ENCODE measurements at regions of chr9 and their contacts with region 1.

Region 1: DNA sequence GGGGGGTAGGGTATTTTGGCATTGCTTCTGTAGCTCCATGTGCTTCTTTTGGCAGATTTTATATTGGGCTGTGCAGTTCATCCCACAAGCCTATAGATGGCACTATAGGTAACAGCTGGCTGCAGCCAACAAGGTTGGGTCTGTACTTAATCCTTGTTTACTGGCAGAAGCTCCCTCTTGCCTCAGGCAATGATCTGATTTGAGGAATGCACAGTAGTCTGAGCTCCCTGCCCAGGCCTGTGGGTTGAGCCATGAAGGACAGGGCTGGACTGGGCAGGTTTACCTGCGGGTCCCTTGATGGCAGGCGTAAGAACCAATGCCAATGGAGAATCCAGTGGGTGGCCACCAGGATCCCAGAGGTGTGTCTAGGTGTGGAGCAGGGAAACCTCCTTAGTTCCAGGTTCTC is 11.7 kb upstream of the OR1J2 start:
- DNase-seq: peak; percentile 18
- H3K4me3 ChIP-seq: no peak overlapping the region
- H3K27ac ChIP-seq: no peak overlapping the region
- H3K27me3 ChIP-seq: no peaks in the 10 kb centered on the region
- CTCF ChIP-seq: peak; percentile 80

Region 2: GRCh38 chr9:122477346-122477745 is 21.5 kb before region 1 on chr9:
- CTCF ChIA-PET with region 1: interaction called, 17 read pairs
- POLR2A ChIA-PET with region 1: no interaction called
- DNase-seq: no peak
- H3K4me3 ChIP-seq: no peak overlapping the region
- H3K27ac ChIP-seq: no peak overlapping the region
- H3K27me3 ChIP-seq: no peaks in the 10 kb centered on the region
- CTCF ChIP-seq: no peak

Region 3: GRCh38 chr9:122518226-122518625 is 19.3 kb after region 1 on chr9:
- CTCF ChIA-PET with region 1: interaction called, 14 read pairs
- POLR2A ChIA-PET with region 1: no interaction called
- DNase-seq: no peak
- H3K4me3 ChIP-seq: no peak overlapping the region
- H3K27ac ChIP-seq: no peak overlapping the region
- H3K27me3 ChIP-seq: no peaks in the 10 kb centered on the region
- CTCF ChIP-seq: no peak

Region 4: GRCh38 chr9:122810306-122810946 is 311.5 kb after region 1 on chr9:
- CTCF ChIA-PET with region 1: interaction called, 31 read pairs
- POLR2A ChIA-PET with region 1: no interaction called
- DNase-seq: peak; percentile 59
- H3K4me3 ChIP-seq: no peak overlapping the region
- H3K27ac ChIP-seq: no peak overlapping the region
- H3K27me3 ChIP-seq: no peaks in the 10 kb centered on the region
- CTCF ChIP-seq: peak; percentile 68